Activated CD8-positive, alpha-beta T cell treated with anti-CD3 and anti-CD28 coated beads for 36 hours (primary cell): ENCODE measurements at regions of chr7 and their contacts with region 1.

Region 1: GRCh38 chr7:26278770-26279169 is 12.9 kb upstream of the SNX10 start:
- DNase-seq: peak; percentile 10
- ATAC-seq: peak; percentile 37
- H3K4me3 Mint-ChIP-seq: no peak overlapping the region
- H3K27ac Mint-ChIP-seq: no peak overlapping the region
- H3K4me1 Mint-ChIP-seq: peaks cover 24% of the 10 kb centered on the region
- H3K27me3 Mint-ChIP-seq: no peaks in the 10 kb centered on the region
- CTCF ChIP-seq: peak; percentile 44

Region 2: GRCh38 chr7:26291699-26292538 is 13.1 kb after region 1 on chr7 and contains the start of gene SNX10:
- CTCF ChIA-PET with region 1: interaction called, 6 read pairs
- POLR2A ChIA-PET with region 1: interaction called, 3 read pairs
- intact Hi-C with region 1: loop called (anchors 2 kb)
- DNase-seq: peak; percentile 77
- ATAC-seq: peak; percentile 69
- H3K4me3 Mint-ChIP-seq: peak within 1 kb of the TSS; percentile 96
- H3K27ac Mint-ChIP-seq: peak within 1 kb of the TSS; percentile 91
- H3K4me1 Mint-ChIP-seq: peaks cover 28% of the 10 kb centered on the region
- H3K27me3 Mint-ChIP-seq: no peaks in the 10 kb centered on the region
- CTCF ChIP-seq: no peak
- total RNA-seq, gene SNX10: 47.8 to 51.1 TPM

Region 3: GRCh38 chr7:26337232-26337865 is 58.6 kb after region 1 on chr7:
- CTCF ChIA-PET with region 1: no interaction called
- POLR2A ChIA-PET with region 1: no interaction called
- intact Hi-C with region 1: no loop called
- DNase-seq: no peak
- ATAC-seq: no peak
- H3K4me3 Mint-ChIP-seq: no peak overlapping the region
- H3K27ac Mint-ChIP-seq: no peak overlapping the region
- H3K4me1 Mint-ChIP-seq: peaks cover 23% of the 10 kb centered on the region
- H3K27me3 Mint-ChIP-seq: no peaks in the 10 kb centered on the region
- CTCF ChIP-seq: no peak